ENCODE measurements at regions of chr4 and their contacts with region 1.

Region 1: GRCh38 chr4:75724066-75724866 is at the start of gene USO1:
- DNase-seq: peak; percentile 99
- ATAC-seq: peak; percentile 94
- H3K4me3 Mint-ChIP-seq: peak within 1 kb of the TSS; percentile 99
- H3K27ac Mint-ChIP-seq: peak within 1 kb of the TSS; percentile 97
- H3K4me1 Mint-ChIP-seq: peaks cover 46% of the 10 kb centered on the region
- H3K27me3 Mint-ChIP-seq: no peaks in the 10 kb centered on the region
- total RNA-seq, gene USO1: 55.2 to 56.7 TPM

Region 2: DNA sequence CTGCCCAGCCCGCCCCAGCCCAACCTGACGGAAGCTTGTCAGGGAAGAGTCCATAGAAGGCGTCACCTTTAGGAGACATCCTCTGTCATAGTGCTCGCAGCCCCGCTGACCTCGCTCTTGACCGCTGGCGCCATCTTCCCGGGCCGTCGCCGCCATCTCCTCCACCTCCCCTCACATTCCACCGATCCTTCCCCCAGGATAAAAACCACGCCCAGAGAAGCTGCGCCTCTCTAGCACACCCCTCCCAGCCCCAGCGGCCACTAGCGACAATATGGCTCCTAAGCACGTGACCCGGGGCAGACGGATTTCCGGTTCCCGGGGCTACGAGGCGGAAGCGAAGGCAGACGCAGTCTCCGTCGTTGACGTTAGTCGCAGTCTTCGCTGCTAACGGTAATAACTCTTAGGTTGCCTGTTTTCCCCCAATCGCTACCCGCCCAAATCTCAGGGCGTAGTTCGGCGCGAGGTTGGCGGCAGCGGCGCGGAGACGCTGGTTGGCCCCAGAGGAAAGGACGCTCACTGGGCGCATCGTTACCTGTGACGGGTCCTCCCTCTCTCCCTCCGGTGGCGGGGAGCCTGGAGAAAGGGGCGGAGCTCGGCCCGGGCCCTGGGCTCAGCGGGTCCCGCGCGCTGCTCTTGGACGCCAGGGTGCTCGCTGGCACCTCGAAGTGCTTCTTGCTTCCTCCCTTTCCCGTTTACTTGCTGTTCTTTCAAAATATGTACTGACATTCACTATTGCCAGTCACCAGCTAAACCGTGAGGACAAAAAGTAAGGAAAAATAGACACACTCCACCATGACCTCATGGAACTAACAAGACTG is 209.9 kb before region 1 on chr4 and contains the starts of genes RCHY1 and THAP6:
- CTCF ChIA-PET with region 1: interaction called, 15 read pairs
- POLR2A ChIA-PET with region 1: interaction called, 8 read pairs
- intact Hi-C with region 1: loop called (anchors 1 kb)
- DNase-seq: peak; percentile 95
- ATAC-seq: peak; percentile 93
- H3K4me3 Mint-ChIP-seq: no peak within 1 kb of the TSS
- H3K27ac Mint-ChIP-seq: peak within 1 kb of the TSS; percentile 95
- H3K4me1 Mint-ChIP-seq: peaks cover 39% of the 10 kb centered on the region
- H3K27me3 Mint-ChIP-seq: no peaks in the 10 kb centered on the region
- total RNA-seq, gene RCHY1: 32.9 to 33.7 TPM
- total RNA-seq, gene THAP6: 18.4 TPM

Region 3: DNA sequence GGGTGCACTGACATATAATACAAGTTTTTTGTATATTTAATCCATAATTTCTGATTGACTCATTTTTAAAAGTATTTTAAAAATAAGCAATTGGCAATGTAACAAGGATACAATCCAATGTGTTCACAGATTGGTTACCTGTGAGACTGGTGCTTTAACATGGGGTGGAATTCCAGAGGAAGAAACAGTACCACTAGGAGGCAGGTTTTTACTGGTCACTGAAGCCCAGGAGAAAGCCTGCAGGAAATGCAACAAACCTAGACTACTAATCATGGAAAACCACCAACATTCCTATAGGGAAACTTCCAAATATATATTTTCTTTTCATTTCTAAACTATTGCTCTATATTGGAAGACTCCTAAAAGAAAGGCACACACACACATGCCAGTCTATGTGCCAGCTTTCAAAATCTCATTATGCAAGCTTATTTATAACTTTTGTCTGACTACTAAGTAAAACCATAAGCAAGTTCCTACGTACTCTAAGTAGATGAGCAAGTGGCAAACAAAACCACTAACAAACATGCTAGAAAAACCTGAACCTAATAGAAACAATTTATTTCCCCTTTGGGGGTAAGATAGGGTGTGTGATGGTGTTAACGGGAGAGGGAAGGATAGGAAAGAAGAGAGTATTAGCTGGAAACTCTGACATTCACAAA is 70.3 kb before region 1 on chr4:
- CTCF ChIA-PET with region 1: interaction called, 17 read pairs
- POLR2A ChIA-PET with region 1: interaction called, 3 read pairs
- intact Hi-C with region 1: loop called (anchors 1 to 5 kb)
- DNase-seq: no peak
- ATAC-seq: no peak
- H3K4me3 Mint-ChIP-seq: no peak overlapping the region
- H3K27ac Mint-ChIP-seq: peak overlapping the region; percentile 80
- H3K4me1 Mint-ChIP-seq: peaks cover 46% of the 10 kb centered on the region
- H3K27me3 Mint-ChIP-seq: no peaks in the 10 kb centered on the region

Region 4: GRCh38 chr4:75698162-75698962 is 25.9 kb before region 1 on chr4:
- CTCF ChIA-PET with region 1: interaction called, 4 read pairs
- POLR2A ChIA-PET with region 1: interaction called, 3 read pairs
- intact Hi-C with region 1: loop called in 1 of 2 experiments (anchors 2 kb)
- DNase-seq: peak; percentile 52
- ATAC-seq: peak; percentile 82
- H3K4me3 Mint-ChIP-seq: no peak overlapping the region
- H3K27ac Mint-ChIP-seq: peak overlapping the region; percentile 72
- H3K4me1 Mint-ChIP-seq: peaks cover 34% of the 10 kb centered on the region
- H3K27me3 Mint-ChIP-seq: no peaks in the 10 kb centered on the region

Region 5: GRCh38 chr4:75769036-75769435 is 44.8 kb after region 1 on chr4:
- CTCF ChIA-PET with region 1: no interaction called
- POLR2A ChIA-PET with region 1: no interaction called
- intact Hi-C with region 1: no loop called
- DNase-seq: no peak
- ATAC-seq: no peak
- H3K4me3 Mint-ChIP-seq: no peak overlapping the region
- H3K27ac Mint-ChIP-seq: no peak overlapping the region
- H3K4me1 Mint-ChIP-seq: peaks cover 2% of the 10 kb centered on the region
- H3K27me3 Mint-ChIP-seq: no peaks in the 10 kb centered on the region

Region 6: DNA sequence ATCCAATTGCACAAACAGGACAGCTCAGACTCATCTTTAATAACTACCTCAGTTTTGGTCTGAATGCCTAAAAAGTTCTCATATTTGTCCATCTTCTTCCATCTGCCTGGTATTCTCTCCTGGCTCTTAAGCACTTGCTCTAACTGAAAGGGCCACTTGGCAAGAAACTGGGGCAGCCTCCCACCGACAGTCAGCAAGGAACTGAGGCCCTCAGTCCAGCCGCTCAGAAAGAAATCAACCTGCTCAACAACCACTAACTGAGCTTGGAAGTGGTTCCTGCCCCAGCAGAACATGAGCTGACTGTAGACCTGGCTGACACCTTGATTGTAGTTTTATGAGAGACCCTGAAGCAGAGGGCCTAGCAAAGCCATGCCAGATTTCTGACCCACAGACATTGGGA is 93.6 kb after region 1 on chr4:
- CTCF ChIA-PET with region 1: no interaction called
- POLR2A ChIA-PET with region 1: no interaction called
- intact Hi-C with region 1: no loop called
- DNase-seq: no peak
- ATAC-seq: no peak
- H3K4me3 Mint-ChIP-seq: no peak overlapping the region
- H3K27ac Mint-ChIP-seq: no peak overlapping the region
- H3K4me1 Mint-ChIP-seq: peaks cover 4% of the 10 kb centered on the region
- H3K27me3 Mint-ChIP-seq: no peaks in the 10 kb centered on the region

Region 7: GRCh38 chr4:75849461-75849860 is 125.2 kb after region 1 on chr4:
- CTCF ChIA-PET with region 1: interaction called, 14 read pairs
- POLR2A ChIA-PET with region 1: interaction called, 3 read pairs
- intact Hi-C with region 1: loop called (anchors 1 to 2 kb)
- DNase-seq: peak; percentile 5
- ATAC-seq: peak; percentile 27
- H3K4me3 Mint-ChIP-seq: no peak overlapping the region
- H3K27ac Mint-ChIP-seq: no peak overlapping the region
- H3K4me1 Mint-ChIP-seq: peaks cover 9% of the 10 kb centered on the region
- H3K27me3 Mint-ChIP-seq: peaks cover 7% of the 10 kb centered on the region

Region 8: DNA sequence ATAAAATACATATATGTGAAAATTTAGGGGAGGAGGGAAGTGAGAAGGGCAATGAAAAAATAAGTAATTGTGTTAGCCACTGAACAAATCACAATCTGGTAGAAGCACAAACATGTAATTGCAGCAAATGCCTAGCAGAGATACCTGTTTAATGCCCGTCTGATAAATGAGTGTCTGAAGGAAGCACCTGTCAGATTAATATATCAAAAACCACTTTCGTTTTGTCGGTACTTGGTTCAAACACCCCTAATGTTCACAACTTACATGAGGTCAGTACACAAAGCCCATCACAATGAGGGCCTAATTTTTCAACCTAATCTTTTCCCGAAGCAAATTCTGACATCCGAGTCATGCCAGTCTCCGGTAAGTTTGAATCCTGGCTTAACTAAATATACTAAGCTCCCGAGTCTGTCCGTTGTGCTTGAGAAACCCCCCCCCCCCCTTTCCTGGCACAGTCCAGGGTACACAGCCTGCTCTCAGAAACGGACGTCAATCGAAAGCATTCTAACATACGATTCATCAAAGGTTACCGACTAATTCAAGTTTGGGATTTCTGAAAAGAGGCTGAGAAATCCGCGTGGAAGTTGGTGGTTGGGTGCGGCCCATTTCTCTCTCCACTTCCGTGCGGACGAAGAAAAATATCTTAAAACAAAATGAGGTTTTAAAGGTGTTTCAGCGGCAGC is 265.7 kb after region 1 on chr4:
- CTCF ChIA-PET with region 1: no interaction called
- POLR2A ChIA-PET with region 1: no interaction called
- intact Hi-C with region 1: loop called in 1 of 2 experiments (anchors 1 kb)
- DNase-seq: no peak
- ATAC-seq: no peak
- H3K4me3 Mint-ChIP-seq: peak overlapping the region; percentile 83
- H3K27ac Mint-ChIP-seq: peak overlapping the region; percentile 88
- H3K4me1 Mint-ChIP-seq: peaks cover 29% of the 10 kb centered on the region
- H3K27me3 Mint-ChIP-seq: no peaks in the 10 kb centered on the region

Measured in activated CD4-positive, alpha-beta T cell treated with anti-CD3 and anti-CD28 coated beads for 36 hours (primary cell).